Gastrocnemius medialis (tissue), 4 donors: ENCODE measurements at regions of chr5 and their contacts with region 1.

Region 1: DNA sequence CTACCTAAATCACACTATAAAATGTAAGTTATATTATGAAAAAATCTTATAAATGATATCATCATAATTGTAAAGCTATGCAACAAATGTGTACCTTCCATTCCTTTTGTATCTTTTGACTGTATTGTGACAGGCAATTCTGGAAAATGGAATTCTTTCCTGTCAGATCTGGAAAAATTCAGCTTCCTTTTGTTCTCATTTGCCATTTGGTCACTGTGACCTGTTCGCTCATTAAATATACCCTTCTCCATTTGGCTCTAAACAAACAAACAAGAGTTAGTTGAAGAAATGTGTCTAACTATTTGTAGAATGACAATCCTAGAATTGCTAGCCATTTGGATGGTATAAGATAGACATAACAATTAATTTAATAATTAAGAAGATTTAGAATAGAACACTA is 62.7 kb downstream of the CDKL3 start:
- DNase-seq: no peak
- ATAC-seq: no peak
- H3K4me3 ChIP-seq: no peak overlapping the region
- H3K27ac ChIP-seq: no peak overlapping the region
- H3K4me1 ChIP-seq: no peaks in the 10 kb centered on the region
- H3K27me3 ChIP-seq: no peaks in the 10 kb centered on the region
- CTCF ChIP-seq: no peak
- POLR2A ChIP-seq: no peak

Region 2: DNA sequence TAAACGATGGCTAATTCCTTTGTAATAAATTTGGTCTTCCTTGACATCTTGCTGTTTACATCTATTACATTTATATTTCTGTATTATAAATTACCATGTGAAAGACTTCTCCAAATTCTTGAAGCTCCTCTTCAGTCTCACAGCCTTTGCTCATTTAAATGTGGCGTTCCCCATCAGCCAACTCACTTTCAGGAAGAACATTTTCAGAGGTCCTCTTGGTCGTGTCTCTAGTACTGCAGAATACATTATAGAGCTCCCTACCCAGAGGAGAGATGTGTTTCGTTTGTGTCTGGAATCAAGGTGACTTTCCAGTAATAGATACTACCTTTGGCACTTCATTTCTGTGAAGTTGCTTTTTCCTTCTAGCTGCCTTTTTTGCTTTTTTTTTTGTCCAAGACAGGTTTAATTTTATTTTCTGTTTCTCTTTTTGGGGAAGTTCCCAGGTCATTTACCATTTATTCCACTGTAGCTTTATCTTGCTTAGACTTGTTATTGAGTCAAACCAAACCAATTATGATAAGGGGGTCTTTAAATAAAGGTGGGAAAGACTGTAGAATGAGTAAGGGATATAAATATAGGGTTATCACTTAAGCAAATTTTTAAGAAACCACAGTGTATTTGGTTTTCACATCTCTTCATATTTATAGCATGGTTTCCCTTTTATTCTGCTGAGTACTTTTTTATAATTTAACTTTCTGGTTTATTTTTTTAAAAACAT is 79.8 kb after region 1 on chr5:
- in situ Hi-C with region 1: no loop called
- intact Hi-C with region 1: no loop called
- DNase-seq: no peak
- ATAC-seq: no peak
- H3K4me3 ChIP-seq: no peak overlapping the region
- H3K27ac ChIP-seq: peak overlapping the region in 1 of 4 donors; percentile 2
- H3K4me1 ChIP-seq: no peaks in the 10 kb centered on the region
- H3K27me3 ChIP-seq: no peaks in the 10 kb centered on the region
- CTCF ChIP-seq: no peak
- POLR2A ChIP-seq: no peak

Region 3: GRCh38 chr5:134577796-134578363 is 273.6 kb after region 1 on chr5:
- in situ Hi-C with region 1: loop called in 3 of 4 experiments (anchors 5 kb)
- intact Hi-C with region 1: loop called (anchors 2 kb)
- DNase-seq: peak; percentile 31 to 69
- ATAC-seq: peak; percentile 53 to 57
- H3K4me3 ChIP-seq: no peak overlapping the region
- H3K27ac ChIP-seq: peak overlapping the region in 1 of 4 donors; percentile 7
- H3K4me1 ChIP-seq: peaks cover 27 to 38% of the 10 kb centered on the region in 2 donors
- H3K27me3 ChIP-seq: no peaks in the 10 kb centered on the region
- CTCF ChIP-seq: peak; percentile 80 to 87 (median 86)
- POLR2A ChIP-seq: no peak

Region 4: DNA sequence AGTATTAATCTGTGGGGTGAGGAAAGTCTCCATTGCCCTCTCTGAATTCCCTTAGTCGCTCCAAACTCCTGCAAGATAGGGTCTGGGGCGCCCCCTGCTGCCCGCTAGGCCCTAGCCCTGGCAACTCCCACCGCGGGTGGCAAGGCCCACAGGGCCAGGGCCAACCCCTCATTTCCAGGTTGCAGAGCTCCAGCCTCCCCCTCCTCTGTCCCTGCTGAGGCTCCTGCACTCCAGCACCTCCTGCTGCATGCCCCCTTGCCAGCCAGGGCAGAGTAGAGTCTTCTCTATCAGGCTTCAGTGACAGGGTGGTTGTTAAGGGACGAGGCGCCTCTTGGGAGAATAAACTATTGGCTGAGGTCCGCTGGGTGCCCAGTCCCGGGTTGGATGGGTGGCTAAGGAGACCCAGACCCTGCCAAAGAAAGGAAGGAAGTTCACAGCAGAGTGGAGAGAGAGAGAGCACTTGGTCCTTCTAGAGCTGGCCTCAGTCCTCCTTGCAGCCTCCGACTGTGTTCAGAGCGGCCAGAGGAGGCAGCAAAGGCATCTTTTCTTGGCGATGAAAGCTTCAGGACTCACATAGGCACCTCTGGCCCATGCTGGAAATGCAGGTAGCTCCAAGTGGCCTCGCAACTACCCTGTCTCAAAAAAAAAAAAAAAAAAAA is 282.7 kb after region 1 on chr5:
- in situ Hi-C with region 1: loop called (anchors 5 kb)
- intact Hi-C with region 1: loop called (anchors 2 kb)
- DNase-seq: peak; percentile 43 to 77
- ATAC-seq: peak; percentile 42 to 63
- H3K4me3 ChIP-seq: no peak overlapping the region
- H3K27ac ChIP-seq: peak overlapping the region in 3 of 4 donors; percentile 5 to 65 (median 13)
- H3K4me1 ChIP-seq: peaks cover 30 to 43% of the 10 kb centered on the region in 2 donors
- H3K27me3 ChIP-seq: no peaks in the 10 kb centered on the region
- CTCF ChIP-seq: peak; percentile 63 to 84 (median 81)
- POLR2A ChIP-seq: no peak

Region 5: GRCh38 chr5:135441350-135441831 is 1137.1 kb after region 1 on chr5:
- in situ Hi-C with region 1: no loop called
- intact Hi-C with region 1: no loop called
- DNase-seq: no peak
- ATAC-seq: no peak
- H3K4me3 ChIP-seq: no peak overlapping the region
- H3K27ac ChIP-seq: no peak overlapping the region
- H3K4me1 ChIP-seq: peaks cover 17 to 22% of the 10 kb centered on the region in 2 donors
- H3K27me3 ChIP-seq: no peaks in the 10 kb centered on the region
- CTCF ChIP-seq: no peak
- POLR2A ChIP-seq: no peak